Activated CD4-positive, alpha-beta memory T cell treated with anti-CD3 and anti-CD28 coated beads for 36 hours (primary cell): ENCODE measurements at regions of chr12 and their contacts with region 1.

Region 1: GRCh38 chr12:24728366-24728765 is 220.5 kb downstream of the BCAT1 start:
- DNase-seq: no peak
- H3K4me3 Mint-ChIP-seq: no peak overlapping the region
- H3K27ac Mint-ChIP-seq: peak overlapping the region; percentile 38
- H3K4me1 Mint-ChIP-seq: peaks cover 54% of the 10 kb centered on the region
- H3K27me3 Mint-ChIP-seq: no peaks in the 10 kb centered on the region

Region 2: DNA sequence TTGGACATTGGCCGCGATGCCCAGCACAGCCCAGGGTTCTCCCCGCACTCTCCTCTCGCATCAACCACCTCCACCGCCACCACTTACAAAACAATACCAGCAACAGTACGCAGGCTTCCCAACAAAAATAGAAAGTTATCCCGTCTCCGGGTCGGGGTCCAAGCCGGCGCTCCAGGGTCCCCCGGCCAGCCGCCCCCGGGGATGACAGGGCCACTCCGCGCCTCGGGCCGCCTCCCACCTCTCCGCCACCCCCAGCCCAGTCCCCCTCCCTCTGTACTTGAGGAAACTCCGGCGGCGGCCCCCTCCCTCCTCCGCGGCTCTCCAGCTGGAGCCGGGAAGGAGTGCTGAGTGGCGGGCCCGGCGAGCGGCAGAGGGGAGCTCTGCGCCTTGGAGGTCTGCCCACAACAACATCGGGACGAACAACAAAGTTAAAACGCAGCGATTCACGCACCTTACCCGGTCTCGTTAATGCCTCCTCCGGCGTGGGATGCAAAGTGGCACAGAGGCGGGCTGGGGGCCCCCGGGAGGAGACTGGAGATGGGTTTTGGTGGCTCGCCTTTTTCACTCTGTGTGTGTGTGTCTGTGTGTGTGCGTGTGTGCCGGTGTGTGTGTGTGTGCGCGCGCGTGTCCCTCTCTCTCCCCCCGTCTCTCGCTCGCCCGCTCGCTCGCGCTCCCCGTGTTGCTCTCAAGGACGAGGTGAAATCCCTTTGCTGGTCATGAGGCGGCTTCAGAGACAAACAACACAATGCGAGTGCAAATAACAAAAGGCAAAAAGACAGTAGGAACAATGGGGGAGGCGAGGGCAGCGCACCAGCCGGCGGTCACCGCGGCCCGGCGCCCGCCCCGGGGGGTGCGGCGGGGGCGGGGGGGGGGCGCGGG is 166.2 kb before region 1 on chr12:
- CTCF ChIA-PET with region 1: no interaction called
- POLR2A ChIA-PET with region 1: no interaction called
- intact Hi-C with region 1: loop called (anchors 2 kb)
- DNase-seq: peak; percentile 31
- H3K4me3 Mint-ChIP-seq: peak overlapping the region; percentile 72
- H3K27ac Mint-ChIP-seq: no peak overlapping the region
- H3K4me1 Mint-ChIP-seq: peaks cover 19% of the 10 kb centered on the region
- H3K27me3 Mint-ChIP-seq: peaks cover 56% of the 10 kb centered on the region

Region 3: GRCh38 chr12:24617471-24617870 is 110.9 kb before region 1 on chr12:
- CTCF ChIA-PET with region 1: no interaction called
- POLR2A ChIA-PET with region 1: no interaction called
- intact Hi-C with region 1: no loop called
- DNase-seq: no peak
- H3K4me3 Mint-ChIP-seq: no peak overlapping the region
- H3K27ac Mint-ChIP-seq: no peak overlapping the region
- H3K4me1 Mint-ChIP-seq: no peaks in the 10 kb centered on the region
- H3K27me3 Mint-ChIP-seq: no peaks in the 10 kb centered on the region

Region 4: DNA sequence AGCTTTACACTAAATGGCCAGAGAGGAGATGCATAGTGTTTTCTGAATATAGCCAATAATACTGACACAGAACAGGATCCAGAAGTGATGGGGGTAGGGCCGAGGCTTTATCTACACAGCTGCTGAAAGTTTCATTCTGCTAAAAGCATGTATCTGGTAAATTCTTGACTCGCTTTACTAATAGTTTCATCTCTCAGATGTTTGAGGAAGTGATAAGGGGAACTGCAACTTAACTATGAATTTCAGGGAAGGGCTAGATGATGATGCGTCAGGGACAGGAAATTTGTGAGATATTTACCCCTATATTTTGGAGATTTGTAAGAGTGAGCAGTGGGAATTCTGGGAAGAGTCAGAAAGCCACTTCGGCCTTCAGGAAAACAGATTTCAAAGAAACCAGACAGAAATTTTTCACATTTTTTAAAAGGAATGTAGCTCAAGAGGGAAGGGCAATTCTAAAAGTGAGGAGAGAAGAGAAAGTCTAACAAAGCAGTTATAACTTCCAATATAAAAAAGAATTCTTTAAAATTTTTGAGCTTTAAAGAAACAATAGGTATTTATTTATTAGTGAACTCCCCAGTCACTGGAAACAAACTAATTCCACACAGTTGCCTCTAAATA is 22.5 kb before region 1 on chr12:
- CTCF ChIA-PET with region 1: no interaction called
- POLR2A ChIA-PET with region 1: interaction called, 6 read pairs
- intact Hi-C with region 1: loop called (anchors 1 kb)
- DNase-seq: peak; percentile 38
- H3K4me3 Mint-ChIP-seq: peak overlapping the region; percentile 6
- H3K27ac Mint-ChIP-seq: peak overlapping the region; percentile 73
- H3K4me1 Mint-ChIP-seq: peaks cover 21% of the 10 kb centered on the region
- H3K27me3 Mint-ChIP-seq: peaks cover 3% of the 10 kb centered on the region

Region 5: DNA sequence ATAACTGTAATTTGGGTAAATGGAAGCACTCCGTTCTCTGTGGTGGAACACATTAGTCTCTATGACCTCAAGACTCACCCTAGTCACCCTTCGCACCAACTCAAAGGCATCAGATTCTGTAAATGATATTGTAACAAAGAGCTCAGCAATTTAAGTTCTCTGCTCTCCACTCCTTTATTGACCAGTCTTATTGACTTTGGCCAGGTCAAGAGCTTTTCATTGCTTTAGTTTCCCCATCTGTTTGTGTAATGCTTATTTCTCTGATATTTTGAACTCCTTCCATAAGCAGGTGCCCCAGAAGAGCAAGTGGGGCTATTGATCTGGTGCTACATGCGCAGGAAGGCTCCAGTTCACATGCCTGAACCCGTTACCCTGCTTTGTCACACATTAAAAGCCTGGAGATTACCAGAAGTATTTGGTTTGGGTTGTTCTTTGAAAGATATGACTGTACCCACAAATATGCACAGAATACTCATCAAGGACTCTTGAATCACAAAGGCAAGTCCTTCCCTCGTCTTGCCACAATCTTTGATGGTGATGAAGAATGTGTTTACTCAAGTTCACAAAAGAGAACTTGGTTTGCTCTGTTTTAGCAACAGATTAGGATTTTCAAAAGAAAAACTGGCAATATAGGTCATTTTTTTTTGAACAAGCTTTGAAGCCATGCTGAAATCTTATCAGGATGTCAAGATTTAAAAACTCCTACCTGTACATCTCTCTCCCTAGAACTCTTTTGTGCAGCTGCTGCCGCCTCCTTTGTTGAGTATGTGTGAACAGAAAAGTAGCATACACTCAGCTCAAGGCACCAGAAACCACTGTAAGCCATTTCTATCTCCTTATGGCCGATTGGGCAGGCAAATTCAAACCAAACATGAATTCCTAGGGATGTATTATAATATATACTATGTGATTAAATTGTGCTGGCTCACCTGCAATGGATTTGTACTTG is 26.6 kb after region 1 on chr12:
- CTCF ChIA-PET with region 1: no interaction called
- POLR2A ChIA-PET with region 1: interaction called, 5 read pairs
- intact Hi-C with region 1: loop called (anchors 1 kb)
- DNase-seq: peak; percentile 42
- H3K4me3 Mint-ChIP-seq: no peak overlapping the region
- H3K27ac Mint-ChIP-seq: peak overlapping the region; percentile 73
- H3K4me1 Mint-ChIP-seq: peaks cover 30% of the 10 kb centered on the region
- H3K27me3 Mint-ChIP-seq: peaks cover 7% of the 10 kb centered on the region

Region 6: DNA sequence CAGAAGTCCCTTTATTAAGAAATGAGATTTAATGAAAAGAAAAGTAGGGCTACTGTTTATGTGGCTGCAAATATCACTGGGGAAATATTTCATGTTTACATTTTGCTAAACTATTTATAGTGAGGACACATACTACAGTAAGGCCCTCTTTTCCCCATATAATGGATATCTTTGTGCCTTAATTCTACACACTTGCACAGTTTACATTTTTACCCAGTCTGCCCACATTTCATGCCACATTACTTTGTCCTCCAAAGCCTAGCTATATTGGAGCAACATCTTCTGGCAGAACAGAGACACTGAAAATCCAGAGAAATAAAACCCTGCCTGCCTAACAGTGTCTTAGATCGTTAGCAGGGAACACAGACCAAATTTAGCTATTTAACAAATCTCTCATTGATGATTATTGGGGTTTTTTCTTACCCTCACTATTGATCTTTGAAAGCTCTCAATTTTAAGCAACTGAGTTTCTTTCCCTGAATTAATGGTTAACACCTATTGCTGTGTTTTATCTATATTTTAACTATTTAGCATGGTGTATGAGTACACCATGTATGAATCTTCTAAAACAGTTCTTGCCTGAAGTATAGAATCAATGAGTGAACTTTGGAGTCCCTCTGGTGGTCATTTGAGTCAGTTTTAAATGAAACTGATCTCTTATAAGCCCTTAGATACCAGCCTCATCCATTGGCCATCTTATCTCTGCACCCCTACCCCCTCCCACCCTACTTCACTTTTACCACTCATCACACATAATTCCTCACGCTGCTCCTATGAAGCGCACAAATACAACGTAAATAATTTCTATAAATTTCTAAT is 50.3 kb after region 1 on chr12:
- CTCF ChIA-PET with region 1: interaction called, 3 read pairs
- POLR2A ChIA-PET with region 1: no interaction called
- intact Hi-C with region 1: loop called (anchors 1 kb)
- DNase-seq: no peak
- H3K4me3 Mint-ChIP-seq: no peak overlapping the region
- H3K27ac Mint-ChIP-seq: no peak overlapping the region
- H3K4me1 Mint-ChIP-seq: no peaks in the 10 kb centered on the region
- H3K27me3 Mint-ChIP-seq: peaks cover 9% of the 10 kb centered on the region

Region 7: DNA sequence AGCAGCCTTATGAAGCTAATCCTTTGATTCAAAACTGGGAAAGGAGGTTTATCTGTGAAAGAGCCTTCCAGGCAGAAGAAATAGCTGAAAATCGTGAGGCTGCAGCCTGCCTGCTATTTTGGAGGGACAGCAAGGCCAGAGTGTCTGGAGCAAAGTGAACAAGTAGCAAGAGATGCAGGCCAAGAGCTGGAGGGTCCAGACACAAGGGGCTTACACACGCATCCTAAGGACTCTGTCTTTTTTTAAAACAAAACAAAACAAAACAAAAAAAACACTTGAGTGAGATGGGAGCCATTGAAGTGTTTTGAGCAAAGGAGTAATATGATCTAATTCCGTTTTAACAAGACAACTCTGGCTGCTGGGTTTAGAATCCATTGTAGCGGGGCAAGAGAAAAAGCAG is 296.9 kb after region 1 on chr12:
- CTCF ChIA-PET with region 1: no interaction called
- POLR2A ChIA-PET with region 1: no interaction called
- intact Hi-C with region 1: no loop called
- DNase-seq: no peak
- H3K4me3 Mint-ChIP-seq: no peak overlapping the region
- H3K27ac Mint-ChIP-seq: no peak overlapping the region
- H3K4me1 Mint-ChIP-seq: no peaks in the 10 kb centered on the region
- H3K27me3 Mint-ChIP-seq: no peaks in the 10 kb centered on the region